ENCODE measurements at regions of chr3 and their contacts with region 1.

Region 1: DNA sequence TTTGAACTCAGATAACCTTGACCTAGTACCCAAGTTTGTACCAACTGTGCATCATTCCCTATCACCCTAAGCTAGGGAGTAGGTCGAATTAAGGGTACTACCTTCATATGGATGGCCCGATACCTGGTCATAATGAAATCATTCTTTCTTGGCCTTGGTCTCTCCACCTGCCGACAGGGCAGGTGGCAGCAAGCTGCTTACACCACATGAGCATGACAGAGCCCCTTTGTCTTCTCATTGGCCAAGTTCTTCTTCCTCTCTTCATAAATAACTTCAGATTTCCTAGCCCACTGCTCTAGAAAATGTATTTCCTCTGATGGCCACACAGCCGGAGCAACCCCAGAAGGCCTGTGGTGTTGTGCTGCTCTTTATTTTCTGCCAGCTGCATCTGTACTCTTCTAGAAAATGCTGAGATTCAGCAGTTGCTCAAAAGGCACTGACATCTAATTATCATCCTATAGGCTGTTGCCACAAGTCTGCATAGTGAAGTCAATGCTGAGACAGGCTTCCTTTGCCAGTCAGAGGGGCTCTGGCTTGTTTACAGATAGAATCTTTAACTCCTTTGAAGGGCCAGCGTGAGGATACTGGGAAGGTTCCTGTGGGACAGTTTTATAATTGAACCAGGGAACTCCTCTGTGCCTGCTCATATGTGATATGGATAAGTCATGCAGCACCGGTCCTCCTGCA is 304.2 kb downstream of the PTPRG start:
- DNase-seq: no peak
- ATAC-seq: no peak
- H3K4me3 Mint-ChIP-seq: no peak overlapping the region
- H3K27ac Mint-ChIP-seq: peak overlapping the region; percentile 81; the same call in 1 of the 2 replicates
- H3K4me1 Mint-ChIP-seq: peaks cover 84% of the 10 kb centered on the region
- H3K27me3 Mint-ChIP-seq: no peaks in the 10 kb centered on the region
- CTCF ChIP-seq: no peak

Region 2: DNA sequence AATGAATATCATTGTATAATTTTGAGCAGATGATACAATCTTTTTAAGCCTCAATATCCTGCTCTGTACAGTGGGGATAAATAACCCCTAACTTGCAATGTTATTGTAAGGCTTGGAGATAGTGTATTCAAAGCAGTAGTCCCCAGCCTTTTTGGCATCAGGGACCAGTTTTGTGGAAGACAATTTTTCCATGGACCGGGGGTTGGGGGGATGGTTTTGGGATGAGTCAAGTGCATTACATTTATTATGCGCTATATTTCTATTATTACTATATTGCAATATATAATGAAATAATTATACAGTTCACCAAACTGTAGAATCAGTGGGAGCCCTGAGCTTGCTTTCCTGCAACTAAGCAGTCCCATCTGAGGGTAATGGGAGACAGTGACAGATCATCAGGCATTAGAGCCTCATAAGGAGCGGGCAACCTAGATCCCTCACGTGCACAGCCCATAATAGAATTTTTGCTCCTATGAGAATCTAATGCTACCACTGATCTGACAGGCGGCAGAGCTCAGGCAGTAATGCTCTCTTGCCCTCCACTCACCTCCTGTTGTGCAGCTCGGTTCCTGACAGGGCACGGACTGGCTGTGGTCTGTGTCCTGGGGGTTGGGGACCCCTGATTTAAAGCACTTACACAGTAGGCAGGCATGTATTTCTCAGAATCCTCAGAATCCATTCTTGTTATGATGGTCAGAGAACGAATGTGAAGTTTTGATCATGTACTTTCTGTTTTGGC is 202.1 kb before region 1 on chr3:
- CTCF ChIA-PET with region 1: no interaction called
- POLR2A ChIA-PET with region 1: interaction called, 11 read pairs
- DNase-seq: no peak
- ATAC-seq: peak; percentile 24; the same call in 1 of the 2 replicates
- H3K4me3 Mint-ChIP-seq: no peak overlapping the region
- H3K27ac Mint-ChIP-seq: peak overlapping the region; percentile 92; the same call in 1 of the 2 replicates
- H3K4me1 Mint-ChIP-seq: peaks cover 60% of the 10 kb centered on the region
- H3K27me3 Mint-ChIP-seq: no peaks in the 10 kb centered on the region
- CTCF ChIP-seq: no peak

Region 3: GRCh38 chr3:61730042-61730441 is 135.6 kb before region 1 on chr3:
- CTCF ChIA-PET with region 1: no interaction called
- POLR2A ChIA-PET with region 1: no interaction called
- DNase-seq: no peak
- ATAC-seq: no peak
- H3K4me3 Mint-ChIP-seq: no peak overlapping the region
- H3K27ac Mint-ChIP-seq: peak overlapping the region; percentile 76
- H3K4me1 Mint-ChIP-seq: peaks cover 76% of the 10 kb centered on the region
- H3K27me3 Mint-ChIP-seq: no peaks in the 10 kb centered on the region
- CTCF ChIP-seq: no peak

Region 4: DNA sequence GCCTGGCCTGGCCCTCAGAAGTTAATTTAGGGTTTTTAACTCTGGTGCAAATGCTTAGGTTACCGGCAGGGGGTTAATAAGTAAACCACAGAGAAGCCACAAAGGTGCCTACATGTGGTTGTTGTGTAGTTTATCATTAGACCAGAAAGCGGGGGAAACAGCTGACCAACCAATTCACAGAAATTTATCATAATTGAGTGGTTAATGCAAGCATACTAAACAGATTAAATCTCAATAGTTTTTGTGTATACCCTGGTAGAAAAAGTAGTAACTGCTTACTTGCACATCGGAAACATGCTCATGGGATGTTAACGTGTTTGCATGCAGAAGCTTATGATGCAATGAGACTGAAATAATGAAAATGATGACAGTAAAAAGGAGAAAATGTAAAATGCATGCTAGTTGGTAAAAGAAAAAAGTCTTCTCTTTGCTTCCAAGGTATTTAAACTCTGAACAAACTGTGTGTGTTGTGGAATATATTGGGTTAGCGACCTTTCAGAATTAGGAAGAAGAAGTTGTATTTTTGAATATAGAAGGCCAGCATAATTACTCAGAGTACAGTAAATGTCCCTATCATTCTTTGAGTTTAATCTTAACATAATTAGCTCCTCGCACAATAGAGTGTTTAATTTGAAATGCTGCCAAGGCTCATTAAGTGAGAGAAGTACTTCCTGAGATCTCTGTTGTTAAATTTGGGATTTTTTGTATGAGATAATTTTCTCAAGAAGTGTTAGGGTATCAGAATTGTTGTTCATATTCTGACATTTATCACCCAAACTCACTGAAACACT is 11.9 kb after region 1 on chr3:
- CTCF ChIA-PET with region 1: no interaction called
- POLR2A ChIA-PET with region 1: no interaction called
- DNase-seq: no peak
- ATAC-seq: peak; percentile 25; the same call in 1 of the 2 replicates
- H3K4me3 Mint-ChIP-seq: peak overlapping the region; percentile 23; the same call in 1 of the 2 replicates
- H3K27ac Mint-ChIP-seq: peak overlapping the region; percentile 28; the same call in 1 of the 2 replicates
- H3K4me1 Mint-ChIP-seq: peaks cover 94% of the 10 kb centered on the region
- H3K27me3 Mint-ChIP-seq: no peaks in the 10 kb centered on the region
- CTCF ChIP-seq: no peak

Region 5: GRCh38 chr3:61901986-61902385 is 36.4 kb after region 1 on chr3:
- CTCF ChIA-PET with region 1: no interaction called
- POLR2A ChIA-PET with region 1: no interaction called
- DNase-seq: no peak
- ATAC-seq: no peak
- H3K4me3 Mint-ChIP-seq: no peak overlapping the region
- H3K27ac Mint-ChIP-seq: no peak overlapping the region
- H3K4me1 Mint-ChIP-seq: peaks cover 81% of the 10 kb centered on the region
- H3K27me3 Mint-ChIP-seq: no peaks in the 10 kb centered on the region
- CTCF ChIP-seq: no peak